Activated B cell treated with CpG ODN at 0.5 μM for 24 hours (primary cell): ENCODE measurements at regions of chr11 and their contacts with region 1.

Region 1: GRCh38 chr11:65366340-65366773 is 11.8 kb downstream of the TIGD3 start:
- DNase-seq: no peak
- ATAC-seq: peak; percentile 72
- H3K4me3 Mint-ChIP-seq: no peak overlapping the region
- H3K27ac Mint-ChIP-seq: no peak overlapping the region
- H3K4me1 Mint-ChIP-seq: peaks cover 25% of the 10 kb centered on the region
- H3K27me3 Mint-ChIP-seq: no peaks in the 10 kb centered on the region
- CTCF ChIP-seq: peak; percentile 60

Region 2: GRCh38 chr11:65432686-65433582 is 66.6 kb after region 1 on chr11:
- CTCF ChIA-PET with region 1: interaction called, 3 read pairs
- POLR2A ChIA-PET with region 1: no interaction called
- intact Hi-C with region 1: loop called (anchors 1 kb)
- DNase-seq: no peak
- ATAC-seq: peak; percentile 30
- H3K4me3 Mint-ChIP-seq: no peak overlapping the region
- H3K27ac Mint-ChIP-seq: peak overlapping the region; percentile 73
- H3K4me1 Mint-ChIP-seq: peaks cover 64% of the 10 kb centered on the region
- H3K27me3 Mint-ChIP-seq: no peaks in the 10 kb centered on the region
- CTCF ChIP-seq: no peak

Region 3: DNA sequence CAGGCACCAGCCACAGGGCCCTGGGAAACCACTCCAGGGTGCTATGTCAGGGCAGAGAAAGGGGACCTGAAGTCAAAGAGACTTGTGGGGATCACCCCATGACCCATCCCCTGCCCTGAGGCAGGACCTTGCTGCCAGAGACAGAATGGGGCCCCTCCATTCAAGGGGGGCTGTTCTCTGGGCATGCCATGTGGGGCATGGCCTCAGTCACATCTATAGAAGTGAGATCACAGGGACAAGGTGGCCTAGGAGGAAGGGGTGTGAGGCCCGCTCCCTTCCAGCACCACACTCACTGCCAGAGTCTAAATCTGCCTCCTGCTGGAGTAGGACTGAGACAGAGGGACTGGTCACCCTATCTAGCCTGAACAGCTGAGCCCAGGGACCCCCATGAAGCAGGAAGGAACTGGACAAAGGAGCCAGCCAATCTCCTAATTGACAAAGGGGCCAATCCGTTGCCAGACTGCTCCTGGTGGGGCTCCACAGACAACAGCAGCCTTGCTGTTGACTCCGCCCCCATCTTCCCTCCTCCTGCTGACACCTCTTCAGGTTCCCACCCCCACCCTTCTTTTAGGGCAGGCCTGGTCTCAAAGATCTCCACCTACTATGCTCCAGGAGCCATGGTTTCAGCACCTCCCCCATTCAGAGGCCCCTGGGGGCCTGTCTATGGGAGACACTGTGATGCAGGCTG is 82.2 kb after region 1 on chr11:
- CTCF ChIA-PET with region 1: no interaction called
- POLR2A ChIA-PET with region 1: interaction called, 11 read pairs
- intact Hi-C with region 1: no loop called
- DNase-seq: no peak
- ATAC-seq: no peak
- H3K4me3 Mint-ChIP-seq: no peak overlapping the region
- H3K27ac Mint-ChIP-seq: peak overlapping the region; percentile 50
- H3K4me1 Mint-ChIP-seq: peaks cover 37% of the 10 kb centered on the region
- H3K27me3 Mint-ChIP-seq: no peaks in the 10 kb centered on the region
- CTCF ChIP-seq: no peak

Region 4: GRCh38 chr11:65506770-65507505 is 140.6 kb after region 1 on chr11:
- CTCF ChIA-PET with region 1: interaction called, 3 read pairs
- POLR2A ChIA-PET with region 1: interaction called, 16 read pairs
- intact Hi-C with region 1: loop called (anchors 1 kb)
- DNase-seq: no peak
- ATAC-seq: peak; percentile 49
- H3K4me3 Mint-ChIP-seq: no peak overlapping the region
- H3K27ac Mint-ChIP-seq: peak overlapping the region; percentile 84
- H3K4me1 Mint-ChIP-seq: peaks cover 62% of the 10 kb centered on the region
- H3K27me3 Mint-ChIP-seq: no peaks in the 10 kb centered on the region
- CTCF ChIP-seq: no peak